ENCODE measurements at regions of chr1 and their contacts with region 1.

Region 1: GRCh38 chr1:3453203-3453761 is 1.2 kb upstream of the ARHGEF16 start:
- DNase-seq: peak; percentile 68 to 77
- ATAC-seq: peak; percentile 78 to 87
- H3K4me3 ChIP-seq: no peak overlapping the region
- H3K27ac ChIP-seq: peak overlapping the region in 1 of 2 experiments; percentile 92; a peak in 2 of 6 replicates
- H3K4me1 ChIP-seq: peaks cover 9% of the 10 kb centered on the region; the same call in 1 of the 3 replicates
- CTCF ChIP-seq: peak; percentile 69
- EP300 ChIP-seq: no peak
- POLR2A ChIP-seq: no peak
- RAD21 ChIP-seq: peak; percentile 86 to 92

Region 2: DNA sequence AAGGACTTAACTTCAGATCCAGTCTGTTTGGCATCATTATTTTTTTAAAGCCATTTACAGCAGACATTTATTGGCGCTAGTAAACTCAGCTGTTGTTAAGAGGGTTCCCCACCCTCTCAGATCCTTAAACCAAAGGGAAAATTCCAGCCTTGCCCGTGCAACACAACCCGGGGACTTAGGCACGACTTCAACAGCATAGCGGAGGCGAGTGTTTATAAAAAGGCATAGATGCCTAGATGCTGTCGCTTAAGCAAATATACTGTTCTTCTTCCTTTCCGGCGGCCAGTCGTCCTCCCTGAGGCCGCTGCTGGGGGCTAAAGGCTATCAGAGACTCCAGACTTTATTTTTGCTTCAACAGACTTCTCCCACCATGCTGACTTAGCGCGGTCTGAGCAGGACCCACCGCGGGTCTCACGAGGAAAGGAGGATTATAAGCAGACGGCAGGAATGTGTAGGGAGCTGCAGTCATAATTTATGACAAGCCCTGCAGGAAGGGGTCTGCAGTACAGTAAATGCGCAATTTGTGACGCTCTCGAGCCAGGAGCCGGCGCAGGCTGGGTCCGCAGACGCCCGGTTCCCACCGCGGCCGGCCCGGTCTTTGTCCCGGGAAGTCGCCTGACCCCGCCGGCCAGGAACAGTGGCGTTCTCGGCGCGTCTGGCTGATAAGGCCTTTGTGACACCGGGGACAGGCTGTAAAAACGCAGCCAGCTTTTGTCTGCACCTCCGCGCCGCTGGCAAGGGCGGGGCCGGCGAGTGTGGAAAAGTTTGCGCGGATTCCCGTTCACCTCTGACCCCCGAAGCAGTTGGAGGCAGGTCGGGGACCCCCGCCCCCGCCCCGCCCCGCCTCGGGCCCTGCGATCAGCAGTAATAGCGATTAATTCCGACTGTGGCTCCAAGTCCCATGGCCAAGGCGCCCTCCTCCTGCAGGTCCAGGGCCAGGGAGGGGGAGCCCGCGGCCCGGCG is 60.0 kb before region 1 on chr1:
- CTCF ChIA-PET with region 1: no interaction called
- POLR2A ChIA-PET with region 1: no interaction called
- DNase-seq: no peak
- ATAC-seq: no peak
- H3K4me3 ChIP-seq: no peak overlapping the region
- H3K27ac ChIP-seq: no peak overlapping the region
- H3K4me1 ChIP-seq: no peaks in the 10 kb centered on the region
- CTCF ChIP-seq: no peak
- EP300 ChIP-seq: no peak
- POLR2A ChIP-seq: no peak
- RAD21 ChIP-seq: no peak

Region 3: GRCh38 chr1:3410142-3410925 is 42.9 kb before region 1 on chr1:
- CTCF ChIA-PET with region 1: no interaction called
- POLR2A ChIA-PET with region 1: no interaction called
- DNase-seq: peak; percentile 66 to 83
- ATAC-seq: peak; percentile 88 to 95
- H3K4me3 ChIP-seq: no peak overlapping the region
- H3K27ac ChIP-seq: no peak overlapping the region
- H3K4me1 ChIP-seq: no peaks in the 10 kb centered on the region
- CTCF ChIP-seq: peak; percentile 47; the same call in 2 of the 3 replicates
- EP300 ChIP-seq: no peak
- POLR2A ChIP-seq: no peak
- RAD21 ChIP-seq: peak; percentile 74 to 75

Region 4: GRCh38 chr1:3463891-3464648 is 10.8 kb after region 1 on chr1:
- CTCF ChIA-PET with region 1: interaction called, 33 read pairs
- POLR2A ChIA-PET with region 1: no interaction called
- DNase-seq: no peak
- ATAC-seq: no peak
- H3K4me3 ChIP-seq: no peak overlapping the region
- H3K27ac ChIP-seq: no peak overlapping the region
- H3K4me1 ChIP-seq: peaks cover 3% of the 10 kb centered on the region; the same call in 1 of the 3 replicates
- CTCF ChIP-seq: no peak
- EP300 ChIP-seq: no peak
- POLR2A ChIP-seq: no peak
- RAD21 ChIP-seq: no peak

Region 5: GRCh38 chr1:3483801-3484444 is 30.6 kb after region 1 on chr1:
- CTCF ChIA-PET with region 1: interaction called, 77 read pairs
- POLR2A ChIA-PET with region 1: interaction called, 3 read pairs
- DNase-seq: peak; percentile 23 to 25
- ATAC-seq: peak in 1 of 2 experiments; percentile 62; a peak in 3 of 6 replicates
- H3K4me3 ChIP-seq: no peak overlapping the region
- H3K27ac ChIP-seq: peak overlapping the region in 1 of 2 experiments; percentile 75; a peak in 1 of 6 replicates
- H3K4me1 ChIP-seq: peaks cover 16% of the 10 kb centered on the region
- CTCF ChIP-seq: peak; percentile 56
- EP300 ChIP-seq: no peak
- POLR2A ChIP-seq: no peak
- RAD21 ChIP-seq: peak; percentile 38 to 51

Region 6: GRCh38 chr1:3518256-3518655 is 65.0 kb after region 1 on chr1:
- CTCF ChIA-PET with region 1: interaction called, 10 read pairs
- POLR2A ChIA-PET with region 1: no interaction called
- DNase-seq: no peak
- ATAC-seq: no peak
- H3K4me3 ChIP-seq: no peak overlapping the region
- H3K27ac ChIP-seq: no peak overlapping the region
- H3K4me1 ChIP-seq: no peaks in the 10 kb centered on the region
- CTCF ChIP-seq: 0 out of 3 replicates have a peak, but pooled peaks have one; percentile 16
- EP300 ChIP-seq: no peak
- POLR2A ChIP-seq: no peak
- RAD21 ChIP-seq: no peak

Region 7: DNA sequence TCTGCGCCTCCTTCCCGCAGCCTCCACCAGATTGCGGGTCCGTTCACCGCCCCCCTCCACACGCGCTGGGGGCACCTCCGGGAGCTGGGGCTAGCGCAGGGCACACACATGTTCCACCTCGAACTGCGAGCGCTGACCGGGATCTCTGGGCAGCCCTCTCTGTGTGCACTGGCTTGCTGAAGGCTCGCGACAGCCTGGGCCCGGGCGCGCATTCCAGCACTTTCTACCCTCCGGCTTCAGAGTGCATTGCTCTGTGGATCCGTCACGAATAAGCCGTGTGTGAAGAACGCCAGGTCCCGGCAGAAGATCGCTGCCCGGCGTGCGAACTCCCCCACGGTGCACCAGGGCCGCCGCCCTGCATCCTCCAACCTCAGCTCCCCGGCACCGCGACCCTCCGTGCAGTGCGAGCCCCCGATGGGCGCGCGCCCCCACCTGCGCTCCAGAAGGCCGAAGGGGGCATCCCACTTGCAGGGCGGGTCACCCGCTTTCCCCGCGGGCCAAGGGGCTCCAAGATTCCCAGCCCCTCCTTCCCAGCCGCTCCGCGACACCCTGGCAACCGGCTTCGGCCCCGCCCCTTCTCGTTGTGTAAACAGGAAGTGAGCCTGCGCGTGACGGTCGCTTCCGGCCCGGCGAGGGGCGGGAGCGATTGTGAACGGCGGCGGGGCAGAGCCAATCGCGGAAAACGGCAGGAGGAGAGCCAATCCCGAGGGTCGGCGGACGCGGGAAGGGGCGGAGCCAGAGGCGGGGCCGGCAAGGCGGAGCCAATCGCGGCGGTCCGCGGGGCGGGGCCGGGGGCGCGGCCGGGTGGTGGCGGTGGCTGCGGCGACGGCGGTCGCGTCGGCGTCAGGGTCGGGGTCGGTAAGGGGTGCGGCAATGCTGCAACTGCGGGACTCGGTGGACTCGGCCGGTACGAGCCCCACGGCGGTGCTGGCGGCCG is 171.2 kb after region 1 on chr1 and contains the start of gene TPRG1L:
- CTCF ChIA-PET with region 1: interaction called, 102 read pairs
- POLR2A ChIA-PET with region 1: interaction called, 4 read pairs
- DNase-seq: peak; percentile 90 to 93
- ATAC-seq: peak; percentile 87 to 94
- H3K4me3 ChIP-seq: peak within 1 kb of the TSS; percentile 92
- H3K27ac ChIP-seq: peak within 1 kb of the TSS; percentile 86 to 96
- H3K4me1 ChIP-seq: peaks cover 6% of the 10 kb centered on the region; the same call in 1 of the 3 replicates
- CTCF ChIP-seq: no peak
- EP300 ChIP-seq: no peak
- POLR2A ChIP-seq: peak; percentile 63
- RAD21 ChIP-seq: no peak
- polyA plus RNA-seq, gene TPRG1L: 13.1 and 15.8 TPM in 2 replicates

Region 8: DNA sequence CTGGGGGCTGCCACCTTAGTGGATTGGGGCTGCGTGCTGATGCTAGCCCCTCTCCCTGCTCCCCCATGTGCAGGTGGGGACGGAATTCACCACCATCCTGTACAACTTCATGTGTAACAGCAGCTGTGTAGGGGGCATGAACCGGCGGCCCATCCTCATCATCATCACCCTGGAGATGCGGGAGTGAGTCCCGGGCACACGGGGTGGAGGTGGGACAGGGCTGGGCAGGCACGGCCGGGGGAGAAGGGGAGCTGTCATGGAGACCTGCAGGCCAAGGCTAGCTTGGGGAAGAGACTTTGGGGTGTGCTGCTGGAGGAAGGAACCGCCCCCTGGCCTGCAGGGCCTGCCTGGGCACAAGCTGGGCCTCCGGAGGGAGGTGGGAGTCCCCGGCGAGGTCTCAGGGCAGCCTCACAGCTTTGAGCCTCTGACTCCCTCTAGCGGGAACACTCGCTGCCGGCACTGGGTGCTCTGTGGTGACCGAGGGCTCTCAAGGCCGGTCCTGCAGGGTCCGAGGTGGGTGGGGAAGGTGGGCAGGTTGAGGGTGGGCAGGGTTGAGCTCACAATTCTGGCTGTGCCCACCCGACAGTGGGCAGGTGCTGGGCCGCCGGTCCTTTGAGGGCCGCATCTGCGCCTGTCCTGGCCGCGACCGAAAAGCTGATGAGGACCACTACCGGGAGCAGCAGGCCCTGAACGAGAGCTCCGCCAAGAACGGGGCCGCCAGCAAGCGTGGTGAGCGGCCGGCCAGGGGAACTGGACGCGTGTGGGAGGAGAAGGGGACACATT is 274.0 kb after region 1 on chr1:
- CTCF ChIA-PET with region 1: interaction called, 10 read pairs
- POLR2A ChIA-PET with region 1: no interaction called
- DNase-seq: peak; percentile 53 to 75
- ATAC-seq: peak; percentile 69 to 88
- H3K4me3 ChIP-seq: no peak overlapping the region
- H3K27ac ChIP-seq: no peak overlapping the region
- H3K4me1 ChIP-seq: no peaks in the 10 kb centered on the region
- CTCF ChIP-seq: peak; percentile 25; the same call in 2 of the 3 replicates
- EP300 ChIP-seq: no peak
- POLR2A ChIP-seq: no peak
- RAD21 ChIP-seq: peak in 1 of 2 experiments; percentile 32; a peak in 2 of 5 replicates